ENCODE measurements at regions of chr1 and their contacts with region 1.

Region 1: DNA sequence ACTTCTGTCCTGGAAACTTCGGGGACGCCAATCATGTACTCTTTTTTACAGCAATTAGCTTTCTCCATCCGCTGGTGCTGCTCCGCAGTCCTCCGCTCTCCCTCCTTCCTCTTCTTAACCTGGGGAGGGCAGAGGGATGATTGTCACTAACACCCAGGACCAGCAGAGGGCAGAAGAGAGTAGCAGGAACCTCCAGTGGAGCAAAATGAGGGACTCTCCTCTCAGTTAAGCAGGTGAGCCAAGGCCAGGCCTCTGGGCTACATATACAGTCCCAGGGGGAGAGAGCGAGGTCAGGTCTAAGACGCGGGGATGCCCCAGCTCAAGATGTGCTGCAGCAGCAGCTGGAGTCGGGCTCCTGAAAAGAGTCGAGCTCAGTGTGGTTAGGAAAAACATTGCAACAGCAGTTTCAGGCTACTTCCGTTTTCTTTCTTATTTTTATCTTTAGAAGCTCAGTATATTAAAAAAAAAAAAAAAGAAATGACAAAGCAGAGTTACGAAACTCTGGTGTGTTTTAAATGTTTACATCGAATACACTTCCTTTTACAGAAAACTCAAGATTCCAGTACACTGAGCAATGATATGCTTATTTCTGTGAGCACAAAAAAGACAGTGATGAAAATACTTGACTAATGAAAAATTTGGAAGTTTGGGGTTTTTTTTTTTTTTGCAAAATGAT is 25.7 kb upstream of the NLRP3 start:
- DNase-seq: peak; percentile 75
- ATAC-seq: peak; percentile 99
- H3K4me3 Mint-ChIP-seq: peak overlapping the region; percentile 60
- H3K27ac Mint-ChIP-seq: peak overlapping the region; percentile 75
- H3K4me1 Mint-ChIP-seq: peaks cover 22% of the 10 kb centered on the region
- H3K27me3 Mint-ChIP-seq: no peaks in the 10 kb centered on the region
- CTCF ChIP-seq: no peak

Region 2: DNA sequence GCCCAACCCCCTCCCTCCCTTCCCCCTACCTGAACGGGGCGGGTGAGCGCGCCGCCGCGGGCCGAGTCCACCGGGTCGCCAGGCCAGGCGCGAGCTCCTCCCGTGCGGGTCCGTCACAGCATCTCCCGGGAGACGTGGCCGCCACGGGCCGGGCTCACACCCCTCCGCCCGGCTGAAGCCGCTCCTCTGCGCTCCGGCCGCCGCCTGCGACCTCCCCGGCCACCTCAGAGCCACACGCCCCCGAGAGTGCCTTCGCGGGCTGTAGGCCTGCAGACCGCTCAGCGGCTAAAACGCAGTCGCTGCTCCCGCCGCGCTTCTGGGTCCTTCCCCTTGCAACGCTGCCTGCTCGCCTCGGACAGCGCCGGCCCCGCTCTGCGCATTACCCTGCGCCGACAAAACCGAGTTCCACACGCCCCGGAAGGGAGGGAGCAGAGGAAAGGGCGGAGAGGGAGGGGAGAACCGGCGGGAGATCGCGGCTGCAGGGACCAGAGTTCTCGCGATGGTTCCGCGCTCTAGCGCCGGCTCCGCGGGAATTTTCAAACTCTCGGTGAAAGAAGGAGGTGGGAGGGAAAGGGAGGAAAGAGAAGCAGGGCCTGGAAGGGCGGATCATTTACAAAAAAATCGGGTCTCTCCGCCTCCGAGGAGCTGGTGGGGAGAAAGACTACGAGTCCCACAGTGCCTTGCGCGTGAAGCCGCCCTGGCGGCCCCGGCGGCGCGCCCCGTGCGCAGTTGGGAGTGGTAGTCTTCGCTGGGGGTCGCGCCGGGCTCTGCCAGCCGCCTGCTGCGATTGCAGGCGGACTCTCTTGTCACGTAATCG is 458.5 kb before region 1 on chr1 and contains the start of gene AHCTF1:
- CTCF ChIA-PET with region 1: no interaction called
- POLR2A ChIA-PET with region 1: interaction called, 10 read pairs
- intact Hi-C with region 1: loop called (anchors 10 kb)
- DNase-seq: peak; percentile 87
- ATAC-seq: peak; percentile 88
- H3K4me3 Mint-ChIP-seq: peak within 1 kb of the TSS; percentile 92
- H3K27ac Mint-ChIP-seq: peak within 1 kb of the TSS; percentile 96
- H3K4me1 Mint-ChIP-seq: peaks cover 29% of the 10 kb centered on the region
- H3K27me3 Mint-ChIP-seq: no peaks in the 10 kb centered on the region
- CTCF ChIP-seq: no peak
- total RNA-seq, gene AHCTF1: 25.3 and 31.3 TPM in 2 replicates

Region 3: GRCh38 chr1:247357781-247358211 is 32.5 kb before region 1 on chr1:
- CTCF ChIA-PET with region 1: no interaction called
- POLR2A ChIA-PET with region 1: interaction called, 10 read pairs
- intact Hi-C with region 1: loop called (anchors 2 kb)
- DNase-seq: no peak
- ATAC-seq: peak; percentile 93
- H3K4me3 Mint-ChIP-seq: peak overlapping the region; percentile 64
- H3K27ac Mint-ChIP-seq: peak overlapping the region; percentile 61
- H3K4me1 Mint-ChIP-seq: peaks cover 26% of the 10 kb centered on the region
- H3K27me3 Mint-ChIP-seq: peaks cover 39% of the 10 kb centered on the region
- CTCF ChIP-seq: no peak

Region 4: DNA sequence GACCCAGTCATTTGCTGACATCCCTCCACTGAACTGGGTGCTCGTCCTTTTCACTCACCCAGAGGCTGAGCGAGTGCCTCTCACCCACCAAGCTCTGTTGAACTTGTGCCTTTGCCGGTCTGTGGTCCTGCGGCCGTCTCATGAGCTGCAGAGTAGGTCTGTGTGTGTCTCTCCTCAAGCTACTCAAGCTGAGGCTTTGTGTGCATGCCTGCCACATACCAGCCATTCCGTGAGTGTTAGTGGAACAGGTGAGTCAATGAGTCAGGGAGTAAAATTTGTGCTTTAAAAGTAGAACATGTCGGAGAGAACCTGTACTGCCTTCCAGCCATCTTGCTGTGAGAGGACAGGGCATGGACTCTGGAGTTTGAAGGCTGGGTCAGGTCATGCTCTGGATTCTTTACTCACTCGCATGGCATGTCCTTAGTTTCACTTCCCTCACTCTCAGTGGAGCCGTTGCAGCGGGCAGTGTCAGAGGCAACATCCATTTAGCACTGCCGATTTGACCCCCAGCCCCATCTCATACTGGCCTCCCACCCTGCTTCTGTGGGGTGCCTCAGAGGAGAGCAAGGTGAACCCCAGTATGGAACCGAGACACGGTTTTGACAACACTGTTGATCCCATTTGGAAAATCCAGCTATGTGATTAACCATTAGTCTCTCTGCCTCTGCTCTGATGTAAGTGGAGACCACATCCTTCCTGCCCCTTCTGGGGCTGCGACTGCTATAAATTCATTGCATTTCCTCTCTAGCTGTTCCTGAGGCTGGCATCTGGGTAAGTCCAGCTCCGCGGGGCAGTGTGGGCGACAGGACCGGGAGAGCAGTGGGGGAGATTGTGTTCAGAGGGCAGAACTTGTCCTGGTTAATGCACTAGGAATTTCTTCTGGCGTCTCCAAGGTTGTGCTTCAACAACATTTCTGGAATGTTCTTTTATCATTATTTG is 25.4 kb after region 1 on chr1 and contains the start of gene NLRP3:
- CTCF ChIA-PET with region 1: interaction called, 13 read pairs
- POLR2A ChIA-PET with region 1: interaction called, 18 read pairs
- intact Hi-C with region 1: loop called (anchors 2 kb)
- DNase-seq: no peak
- ATAC-seq: peak; percentile 76
- H3K4me3 Mint-ChIP-seq: peak within 1 kb of the TSS; percentile 79
- H3K27ac Mint-ChIP-seq: peak within 1 kb of the TSS; percentile 32
- H3K4me1 Mint-ChIP-seq: peaks cover 35% of the 10 kb centered on the region
- H3K27me3 Mint-ChIP-seq: no peaks in the 10 kb centered on the region
- CTCF ChIP-seq: no peak
- total RNA-seq, gene NLRP3: 0.44 and 0.73 TPM in 2 replicates

Region 5: GRCh38 chr1:247487057-247487456 is 96.8 kb after region 1 on chr1:
- CTCF ChIA-PET with region 1: interaction called, 154 read pairs
- POLR2A ChIA-PET with region 1: interaction called, 16 read pairs
- intact Hi-C with region 1: loop called (anchors 1 kb)
- DNase-seq: peak; percentile 17
- ATAC-seq: peak; percentile 81
- H3K4me3 Mint-ChIP-seq: no peak overlapping the region
- H3K27ac Mint-ChIP-seq: no peak overlapping the region
- H3K4me1 Mint-ChIP-seq: no peaks in the 10 kb centered on the region
- H3K27me3 Mint-ChIP-seq: peaks cover 6% of the 10 kb centered on the region
- CTCF ChIP-seq: peak; percentile 55

Region 6: GRCh38 chr1:247936415-247936814 is 546.2 kb after region 1 on chr1:
- CTCF ChIA-PET with region 1: no interaction called
- POLR2A ChIA-PET with region 1: no interaction called
- intact Hi-C with region 1: loop called (anchors 10 kb)
- DNase-seq: no peak
- ATAC-seq: no peak
- H3K4me3 Mint-ChIP-seq: no peak overlapping the region
- H3K27ac Mint-ChIP-seq: no peak overlapping the region
- H3K4me1 Mint-ChIP-seq: no peaks in the 10 kb centered on the region
- H3K27me3 Mint-ChIP-seq: no peaks in the 10 kb centered on the region
- CTCF ChIP-seq: no peak

Measured in activated B cell treated with CpG ODN at 0.5 μM for 24 hours (primary cell).